ENCODE measurements at regions of chr1 and their contacts with region 1.

Region 1: DNA sequence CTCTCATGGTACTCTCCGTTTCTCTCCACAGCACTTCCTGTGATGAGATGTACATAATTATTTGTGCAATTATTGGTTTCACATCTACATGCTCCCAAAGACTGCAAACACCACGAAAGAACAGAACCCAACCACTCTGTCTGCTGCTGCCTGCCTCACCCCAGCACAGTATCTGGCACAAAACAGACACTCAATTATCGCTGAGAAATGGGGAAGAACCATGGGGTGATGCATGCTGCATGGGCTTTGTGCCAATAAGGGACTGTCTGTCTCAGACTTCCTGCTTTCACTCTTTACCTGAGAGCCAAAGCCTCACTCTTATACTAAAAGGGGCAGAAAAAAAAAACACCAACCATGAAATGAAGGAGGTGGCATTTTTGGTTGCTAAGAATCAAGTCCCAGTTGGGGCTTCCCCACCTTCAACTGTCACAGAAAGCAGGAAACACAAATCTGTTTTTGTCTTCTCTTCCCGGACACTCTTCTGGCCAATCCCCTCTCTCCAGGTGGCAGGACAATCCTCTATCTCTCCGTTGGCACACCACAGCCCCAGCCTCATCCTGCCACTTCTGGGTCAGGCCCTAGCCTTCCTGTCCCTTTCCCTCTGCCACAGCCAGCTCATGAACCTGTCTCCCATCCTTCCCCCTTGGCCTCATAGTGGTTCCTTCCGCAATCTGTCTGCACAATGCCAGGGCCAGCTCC is 82.0 kb downstream of the TGFBR3 start:
- DNase-seq: peak; percentile 41 to 93 (median 90)
- ATAC-seq: peak; percentile 69
- H3K4me3 ChIP-seq: peak overlapping the region; percentile 48
- H3K4me3 Mint-ChIP-seq: peak overlapping the region; percentile 67 to 90 (median 78)
- H3K27ac ChIP-seq: peak overlapping the region; percentile 99
- H3K27ac Mint-ChIP-seq: peak overlapping the region; percentile 96 to 100 (median 98)
- H3K4me1 ChIP-seq: peaks cover 27 to 33% of the 10 kb centered on the region in 2 donors
- H3K4me1 Mint-ChIP-seq: peaks cover 34 to 71% (median 49%) of the 10 kb centered on the region in 7 donors
- H3K27me3 ChIP-seq: no peaks in the 10 kb centered on the region
- H3K27me3 Mint-ChIP-seq: peaks cover 0 to 15% (median 0%) of the 10 kb centered on the region in 5 donors

Region 2: DNA sequence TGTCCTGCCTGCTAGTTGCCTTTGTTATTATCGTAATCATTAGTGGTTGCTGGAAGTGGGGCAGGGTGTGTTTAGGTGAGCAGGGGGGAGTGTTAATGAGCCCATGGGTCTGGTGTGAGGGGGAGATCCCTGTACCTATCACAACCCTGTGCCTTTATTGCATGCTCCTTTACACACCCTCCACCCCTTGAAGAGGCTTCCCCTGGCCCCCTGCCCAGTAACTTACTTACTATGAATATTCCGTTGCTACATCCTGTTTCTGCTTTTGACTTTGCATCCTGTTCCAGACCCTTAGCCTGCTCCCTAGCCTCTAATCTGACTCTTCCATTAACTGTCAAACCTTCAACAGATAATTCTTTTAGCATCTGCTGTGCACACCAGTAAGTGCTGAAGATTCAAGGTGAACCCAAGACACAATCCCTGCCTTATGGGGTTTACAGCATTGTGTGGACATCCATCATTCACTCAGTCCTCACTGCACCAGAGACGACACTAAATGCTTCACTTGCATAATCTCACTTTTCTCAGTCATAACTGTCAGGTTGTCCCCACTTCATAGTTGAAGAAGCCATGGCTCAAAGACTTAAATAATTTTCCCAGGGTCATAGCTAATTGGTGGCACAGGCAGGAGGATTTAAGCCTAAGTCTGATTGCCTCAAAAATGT is 255.5 kb before region 1 on chr1:
- CTCF ChIA-PET with region 1: no interaction called
- POLR2A ChIA-PET with region 1: no interaction called
- intact Hi-C with region 1: loop called (anchors 2 kb)
- DNase-seq: peak in 2 of 9 donors; percentile 24 to 34
- ATAC-seq: peak; percentile 45
- H3K4me3 ChIP-seq: peak overlapping the region; percentile 40
- H3K4me3 Mint-ChIP-seq: peak overlapping the region; percentile 63 to 87 (median 70)
- H3K27ac ChIP-seq: peak overlapping the region; percentile 4
- H3K27ac Mint-ChIP-seq: peak overlapping the region; percentile 69 to 97 (median 88)
- H3K4me1 ChIP-seq: peaks cover 27 to 67% of the 10 kb centered on the region in 2 donors
- H3K4me1 Mint-ChIP-seq: peaks cover 29 to 76% (median 36%) of the 10 kb centered on the region in 7 donors
- H3K27me3 ChIP-seq: no peaks in the 10 kb centered on the region
- H3K27me3 Mint-ChIP-seq: peaks cover 0 to 10% (median 0%) of the 10 kb centered on the region in 5 donors

Region 3: DNA sequence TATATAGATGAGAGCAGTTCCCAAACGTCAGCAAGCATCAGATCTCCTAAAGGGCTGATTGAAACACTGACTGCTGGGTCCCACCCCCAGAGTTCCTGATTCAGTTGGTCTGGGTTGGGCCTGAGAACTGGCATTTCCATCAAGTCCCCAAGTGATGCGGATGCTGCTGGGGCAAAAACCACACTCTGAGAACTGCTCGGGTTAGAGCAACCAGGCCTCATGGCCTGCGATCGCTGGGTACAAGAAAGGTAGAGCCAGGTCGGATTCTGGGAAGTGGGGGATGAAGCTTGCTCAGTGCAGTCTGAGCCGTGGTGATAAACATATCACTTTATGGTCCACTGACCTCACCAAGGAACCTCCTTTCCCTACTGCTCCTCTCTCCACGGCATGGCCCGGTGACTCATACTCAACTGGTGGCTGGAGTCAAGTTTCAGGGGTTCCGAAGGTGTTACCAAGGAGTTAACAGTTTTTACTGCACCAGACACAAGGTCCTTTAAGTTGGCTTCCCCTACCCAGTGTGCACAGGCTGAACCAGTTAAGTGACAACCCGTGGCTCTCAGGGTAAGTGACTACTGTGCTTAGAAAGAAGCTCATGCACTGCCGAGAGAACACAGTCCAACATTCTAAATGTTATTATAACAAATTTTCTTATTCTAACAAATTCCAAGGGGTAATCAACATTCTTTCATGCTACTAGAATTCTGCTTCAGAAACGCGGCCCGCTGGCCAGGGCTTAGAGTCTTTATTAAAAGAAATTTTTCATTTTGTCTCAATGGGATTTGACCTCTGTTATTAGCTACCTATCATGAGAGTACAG is 71.5 kb before region 1 on chr1:
- CTCF ChIA-PET with region 1: no interaction called
- POLR2A ChIA-PET with region 1: no interaction called
- intact Hi-C with region 1: loop called (anchors 1 to 2 kb)
- DNase-seq: peak in 1 of 9 donors; percentile 28
- ATAC-seq: peak; percentile 45
- H3K4me3 ChIP-seq: no peak overlapping the region
- H3K4me3 Mint-ChIP-seq: no peak overlapping the region
- H3K27ac ChIP-seq: no peak overlapping the region
- H3K27ac Mint-ChIP-seq: peak overlapping the region in 2 of 9 donors; percentile 32 to 73
- H3K4me1 ChIP-seq: peaks cover 13 to 28% of the 10 kb centered on the region in 2 donors
- H3K4me1 Mint-ChIP-seq: peaks cover 21 to 48% (median 28%) of the 10 kb centered on the region in 7 donors
- H3K27me3 ChIP-seq: no peaks in the 10 kb centered on the region
- H3K27me3 Mint-ChIP-seq: no peaks in the 10 kb centered on the region

Region 4: DNA sequence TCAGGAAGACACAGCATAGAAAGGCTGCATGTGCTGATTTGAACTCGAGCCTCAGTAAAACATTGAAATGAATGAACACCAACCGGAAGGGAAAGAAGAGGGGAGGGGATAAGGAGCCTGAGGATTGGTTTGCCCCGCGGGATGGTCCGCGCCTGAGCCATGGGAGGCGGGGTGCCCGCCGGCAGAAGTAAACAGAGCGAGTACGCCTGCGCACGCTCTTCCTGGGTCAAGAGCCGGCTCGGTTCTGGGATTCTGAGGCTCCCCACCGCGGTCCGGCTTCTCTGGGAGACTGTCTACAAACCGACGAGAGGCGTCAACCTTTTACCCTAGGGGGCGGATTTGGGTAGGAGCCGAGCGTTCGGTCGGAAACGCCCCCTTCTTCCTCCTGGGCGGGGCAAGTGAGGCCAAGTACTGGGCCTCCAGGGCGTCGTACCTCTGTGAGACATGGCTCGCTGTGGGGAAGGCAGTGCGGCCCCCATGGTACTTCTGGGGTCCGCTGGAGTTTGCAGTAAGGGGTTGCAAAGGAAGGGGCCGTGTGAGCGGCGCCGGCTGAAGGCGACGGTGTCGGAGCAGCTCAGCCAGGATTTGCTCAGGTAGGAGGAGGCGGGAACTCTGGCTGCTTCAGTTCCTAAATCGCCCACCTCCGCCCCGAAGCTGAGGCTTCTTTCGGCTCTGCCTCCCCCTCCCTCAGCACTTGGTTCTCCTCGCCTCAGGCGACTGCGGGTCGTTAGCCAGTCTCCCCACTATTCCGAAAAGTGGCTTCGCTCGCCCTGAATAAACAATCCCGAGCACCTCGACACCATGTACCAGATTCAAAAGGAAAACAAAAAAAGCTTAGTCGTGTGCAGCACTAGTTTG is 276.4 kb after region 1 on chr1 and contains the start of gene BTBD8:
- CTCF ChIA-PET with region 1: no interaction called
- POLR2A ChIA-PET with region 1: no interaction called
- intact Hi-C with region 1: loop called in 1 of 2 experiments (anchors 1 kb)
- DNase-seq: peak; percentile 67 to 87 (median 85)
- ATAC-seq: peak; percentile 98
- H3K4me3 ChIP-seq: peak within 1 kb of the TSS; percentile 79
- H3K4me3 Mint-ChIP-seq: peak within 1 kb of the TSS; percentile 87 to 99 (median 98)
- H3K27ac ChIP-seq: peak within 1 kb of the TSS; percentile 74
- H3K27ac Mint-ChIP-seq: peak within 1 kb of the TSS; percentile 85 to 97 (median 93)
- H3K4me1 ChIP-seq: peaks cover 0 to 3% of the 10 kb centered on the region in 2 donors
- H3K4me1 Mint-ChIP-seq: peaks cover 5 to 36% (median 29%) of the 10 kb centered on the region in 7 donors
- H3K27me3 ChIP-seq: no peaks in the 10 kb centered on the region
- H3K27me3 Mint-ChIP-seq: no peaks in the 10 kb centered on the region
- total RNA-seq, gene BTBD8: 2.4 to 11.4 (median 5.3) TPM

Region 5: DNA sequence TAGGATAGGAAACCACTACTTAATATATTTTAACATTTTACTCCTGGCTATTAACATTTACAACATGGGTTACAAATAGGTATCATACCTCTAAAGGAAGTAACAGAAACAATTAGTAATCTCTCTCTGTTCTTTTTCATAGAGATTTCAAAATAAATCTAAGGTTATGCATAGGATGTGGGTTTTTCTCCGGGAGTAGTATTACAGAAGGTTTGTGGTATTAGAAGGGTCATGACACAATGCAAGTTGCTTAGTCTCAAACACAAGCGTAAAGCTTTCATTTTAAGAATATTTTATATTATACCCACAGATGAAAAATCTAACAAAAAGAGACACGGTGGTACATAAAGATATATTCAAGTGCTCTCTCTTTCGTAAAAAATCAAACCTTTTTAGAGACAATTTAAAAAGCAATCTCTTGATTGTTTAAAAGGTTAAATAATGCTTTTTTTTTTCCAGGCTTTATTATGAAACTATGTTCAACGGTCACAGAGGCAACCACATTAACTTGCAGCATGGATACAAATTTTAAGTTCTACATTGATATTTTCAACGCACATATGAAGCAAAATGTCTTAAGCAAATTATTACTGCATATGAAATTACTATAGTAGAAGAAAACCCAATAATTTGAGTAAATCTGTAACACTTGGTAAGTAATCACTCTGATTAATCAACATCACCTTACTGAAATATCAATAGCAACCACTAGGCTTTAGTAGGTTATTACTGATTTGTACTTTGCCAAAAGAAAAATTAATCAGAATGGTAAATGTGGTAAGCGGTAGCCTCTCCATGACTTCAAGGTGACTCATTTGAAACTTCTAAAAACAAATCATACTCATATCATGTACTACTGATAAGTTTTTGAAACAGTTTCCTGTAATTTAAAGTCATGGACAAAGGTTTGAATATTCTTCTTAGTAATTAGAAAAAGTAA is 780.1 kb after region 1 on chr1:
- CTCF ChIA-PET with region 1: no interaction called
- POLR2A ChIA-PET with region 1: no interaction called
- intact Hi-C with region 1: loop called in 1 of 2 experiments (anchors 5 kb)
- DNase-seq: peak in 7 of 9 donors; percentile 50 to 82 (median 76)
- ATAC-seq: peak; percentile 93
- H3K4me3 ChIP-seq: peak overlapping the region; percentile 30
- H3K4me3 Mint-ChIP-seq: peak overlapping the region; percentile 25 to 88 (median 68)
- H3K27ac ChIP-seq: peak overlapping the region; percentile 47
- H3K27ac Mint-ChIP-seq: peak overlapping the region; percentile 41 to 93 (median 86)
- H3K4me1 ChIP-seq: peaks cover 27 to 38% of the 10 kb centered on the region in 2 donors
- H3K4me1 Mint-ChIP-seq: peaks cover 22 to 66% (median 63%) of the 10 kb centered on the region in 7 donors
- H3K27me3 ChIP-seq: no peaks in the 10 kb centered on the region
- H3K27me3 Mint-ChIP-seq: no peaks in the 10 kb centered on the region

Region 6: DNA sequence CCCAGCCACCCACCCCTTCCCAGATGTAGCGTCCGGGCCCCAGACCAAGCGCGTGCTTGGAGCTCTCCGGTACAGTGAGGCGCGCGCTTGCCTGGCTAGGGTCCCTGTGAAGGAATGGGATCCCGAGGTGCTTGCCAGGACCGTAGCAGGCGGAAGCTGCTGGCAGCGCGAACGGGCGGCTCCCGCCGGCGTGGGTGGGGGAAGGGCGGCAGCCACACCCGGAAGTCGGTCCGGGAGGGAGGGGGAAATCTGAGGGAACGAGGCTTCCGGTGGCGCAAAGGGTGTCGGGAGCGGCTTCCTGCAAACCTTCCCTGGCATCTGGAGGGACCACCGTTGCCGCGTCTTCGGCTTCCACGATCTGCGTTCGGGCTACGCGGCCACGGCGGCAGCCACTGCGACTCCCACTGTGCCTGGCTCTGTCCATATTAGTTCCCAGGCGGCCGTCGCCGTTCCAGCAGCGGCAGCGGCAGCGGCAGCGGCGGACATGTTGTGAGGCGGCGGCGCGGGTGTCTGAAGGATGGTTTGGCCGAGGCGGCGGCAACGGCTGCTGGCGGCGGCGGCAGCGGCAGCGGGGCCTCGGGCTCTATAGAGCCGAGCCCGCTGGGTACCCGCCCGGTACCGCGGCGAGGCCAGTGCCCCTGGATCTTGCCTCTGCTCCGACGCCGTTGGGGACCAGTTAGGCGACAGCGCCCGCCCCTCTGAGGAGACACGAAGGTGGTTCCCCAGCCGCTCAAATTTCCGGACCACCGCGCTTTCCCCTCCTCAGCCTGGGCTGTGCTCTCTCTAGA is 1541.8 kb after region 1 on chr1 and contains the start of gene DR1:
- CTCF ChIA-PET with region 1: no interaction called
- POLR2A ChIA-PET with region 1: no interaction called
- intact Hi-C with region 1: loop called in 1 of 2 experiments (anchors 1 kb)
- DNase-seq: peak; percentile 82 to 96 (median 91)
- ATAC-seq: peak; percentile 91
- H3K4me3 ChIP-seq: peak within 1 kb of the TSS; percentile 93
- H3K4me3 Mint-ChIP-seq: peak within 1 kb of the TSS; percentile 92 to 100 (median 99)
- H3K27ac ChIP-seq: peak within 1 kb of the TSS; percentile 88
- H3K27ac Mint-ChIP-seq: peak within 1 kb of the TSS; percentile 89 to 99 (median 98)
- H3K4me1 ChIP-seq: peaks cover 13 to 25% of the 10 kb centered on the region in 2 donors
- H3K4me1 Mint-ChIP-seq: peaks cover 19 to 47% (median 35%) of the 10 kb centered on the region in 7 donors
- H3K27me3 ChIP-seq: no peaks in the 10 kb centered on the region
- H3K27me3 Mint-ChIP-seq: no peaks in the 10 kb centered on the region
- total RNA-seq, gene DR1: 46.2 to 104 (median 62.7) TPM